ENCODE measurements at regions of chr1 and their contacts with region 1.

Region 1: DNA sequence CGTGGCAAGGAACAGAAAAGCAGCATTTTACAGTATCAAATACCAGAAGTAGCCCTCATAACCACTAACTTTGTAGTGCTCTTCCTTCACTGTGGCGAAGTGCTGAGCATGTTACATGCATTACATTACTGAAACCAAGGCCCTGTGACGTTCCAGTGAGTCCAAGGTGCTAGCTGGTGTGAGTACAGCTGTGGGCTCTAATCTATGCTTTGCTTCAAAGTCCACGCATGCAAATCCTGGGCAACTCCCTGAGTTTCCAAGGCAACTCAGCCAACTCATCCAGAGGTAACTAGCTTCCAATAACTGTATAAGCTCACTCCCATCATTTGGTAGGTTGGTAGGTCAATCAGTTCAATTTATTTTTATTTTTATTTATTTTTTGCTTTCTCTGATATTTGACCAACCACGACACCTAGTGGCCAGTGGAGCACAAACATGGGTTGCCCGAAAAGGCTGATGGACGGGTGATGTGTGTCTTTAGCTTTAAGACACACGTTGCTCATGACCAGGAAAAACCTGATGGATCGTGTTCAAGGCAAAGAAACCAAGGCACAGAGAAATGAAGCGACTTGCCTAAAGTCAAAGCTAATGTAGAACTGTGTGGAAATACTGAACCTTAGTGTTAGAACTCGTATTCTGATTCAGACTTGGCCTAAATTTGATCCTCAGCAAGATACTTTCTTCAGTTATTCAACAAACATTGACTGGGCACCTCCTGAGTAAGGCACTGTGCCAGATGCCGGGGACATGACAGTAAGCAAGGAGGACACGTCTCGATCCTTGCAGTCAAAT is 73.0 kb downstream of the GNG12 start:
- DNase-seq: peak; percentile 69
- H3K4me3 Mint-ChIP-seq: no peak overlapping the region
- H3K27ac Mint-ChIP-seq: no peak overlapping the region
- H3K4me1 Mint-ChIP-seq: no peaks in the 10 kb centered on the region
- H3K27me3 Mint-ChIP-seq: peaks cover 29% of the 10 kb centered on the region

Region 2: DNA sequence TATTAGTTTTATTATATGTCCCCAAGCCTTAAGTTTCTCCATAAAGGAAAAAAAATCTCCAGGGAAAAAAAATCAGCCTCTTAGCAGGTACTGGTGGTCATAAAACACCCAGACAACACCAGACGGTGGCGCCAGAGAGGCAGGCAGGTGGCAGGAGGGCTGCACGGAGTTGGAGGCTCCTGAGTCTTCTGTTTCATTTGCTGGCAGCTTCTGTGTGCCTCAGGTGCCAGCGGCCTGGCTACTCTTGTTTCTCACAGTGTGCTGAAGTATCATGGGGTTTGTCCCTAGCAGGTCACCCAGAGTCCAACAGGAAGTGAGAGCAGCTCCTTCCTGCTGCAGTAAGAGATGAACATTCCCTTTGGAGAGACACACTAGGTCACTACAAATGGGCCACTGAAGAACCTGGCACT is 198.5 kb before region 1 on chr1:
- CTCF ChIA-PET with region 1: interaction called, 26 read pairs
- POLR2A ChIA-PET with region 1: no interaction called
- DNase-seq: peak; percentile 88
- H3K4me3 Mint-ChIP-seq: no peak overlapping the region
- H3K27ac Mint-ChIP-seq: no peak overlapping the region
- H3K4me1 Mint-ChIP-seq: peaks cover 5% of the 10 kb centered on the region
- H3K27me3 Mint-ChIP-seq: peaks cover 2% of the 10 kb centered on the region

Region 3: DNA sequence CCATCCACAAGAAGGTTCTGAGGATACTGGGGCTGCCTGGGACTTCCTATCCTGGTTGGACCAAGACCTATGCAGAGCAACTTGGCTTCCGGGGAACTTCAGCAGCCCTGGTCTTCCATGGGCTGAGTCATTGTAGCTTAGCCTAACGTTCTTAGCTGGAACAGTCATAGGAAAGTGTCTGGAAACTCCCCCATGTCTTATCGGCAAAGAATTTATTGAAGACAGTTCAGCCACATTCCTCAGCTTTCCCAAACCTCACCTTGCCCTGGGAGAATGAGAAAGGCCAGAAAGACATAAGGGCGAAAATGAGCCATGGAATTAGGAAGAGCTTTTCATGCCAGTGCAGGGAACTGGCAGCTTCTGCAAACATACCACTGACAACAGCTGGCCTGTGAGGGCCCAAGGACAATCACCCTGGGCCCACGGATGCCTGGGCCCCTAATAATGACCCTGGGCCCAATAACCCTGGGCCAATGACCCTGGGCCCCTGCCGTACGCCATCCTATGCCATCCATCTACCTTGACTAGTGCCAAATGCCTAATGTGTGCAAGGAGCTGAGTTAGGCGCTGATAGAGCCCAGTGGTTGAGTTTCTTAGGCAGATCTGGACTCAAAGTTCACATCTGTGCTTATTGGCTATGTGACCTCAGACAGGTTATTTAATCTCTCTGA is 189.6 kb before region 1 on chr1:
- CTCF ChIA-PET with region 1: interaction called, 17 read pairs
- POLR2A ChIA-PET with region 1: no interaction called
- DNase-seq: no peak
- H3K4me3 Mint-ChIP-seq: no peak overlapping the region
- H3K27ac Mint-ChIP-seq: no peak overlapping the region
- H3K4me1 Mint-ChIP-seq: no peaks in the 10 kb centered on the region
- H3K27me3 Mint-ChIP-seq: no peaks in the 10 kb centered on the region

Region 4: DNA sequence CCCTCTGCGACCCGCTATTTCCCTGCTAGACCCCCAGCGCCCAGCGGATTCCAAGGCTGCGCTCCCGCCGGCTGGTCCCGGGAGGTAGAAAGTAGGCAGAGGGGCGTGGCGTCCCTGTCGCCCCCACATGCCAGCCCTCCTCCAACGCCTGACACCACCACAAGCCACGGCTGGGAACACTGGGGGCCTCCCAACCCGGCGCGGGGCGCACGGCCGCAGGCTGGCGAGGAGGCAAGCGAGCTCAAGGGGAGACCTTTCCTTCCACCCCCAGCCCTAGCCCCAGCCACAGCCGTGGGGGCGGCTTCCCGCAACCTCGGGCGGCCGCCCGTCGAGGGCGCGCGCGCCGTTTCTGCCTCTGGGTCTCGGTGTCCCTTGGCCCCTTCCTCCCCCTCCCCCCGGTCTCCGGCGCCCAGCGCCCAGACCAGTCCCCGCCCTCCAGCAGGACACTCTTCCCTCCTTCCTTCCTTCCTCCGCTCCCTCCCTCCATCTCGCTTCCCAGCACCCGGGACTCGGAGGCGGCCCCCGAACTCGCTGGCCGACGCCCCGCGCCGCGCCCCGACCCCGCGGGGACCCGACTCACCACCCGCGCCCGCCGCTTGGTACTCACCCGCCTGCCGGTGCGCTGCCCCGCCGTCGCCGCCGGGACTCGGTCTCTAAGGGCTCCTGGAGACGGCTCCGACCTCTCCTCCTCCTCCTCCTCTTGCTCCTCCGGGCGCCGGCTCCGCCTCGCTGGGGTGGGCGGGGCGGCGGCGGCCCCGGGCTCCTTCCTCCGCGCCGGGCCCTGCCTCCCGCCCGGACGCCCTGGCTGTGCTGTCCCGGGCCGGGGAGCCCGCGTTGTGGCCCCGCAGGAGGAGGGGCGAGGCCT is 72.7 kb after region 1 on chr1 and contains the start of gene GNG12:
- CTCF ChIA-PET with region 1: no interaction called
- POLR2A ChIA-PET with region 1: no interaction called
- DNase-seq: peak; percentile 28
- H3K4me3 Mint-ChIP-seq: peak within 1 kb of the TSS; percentile 59
- H3K27ac Mint-ChIP-seq: no peak within 1 kb of the TSS
- H3K4me1 Mint-ChIP-seq: peaks cover 16% of the 10 kb centered on the region
- H3K27me3 Mint-ChIP-seq: peaks cover 74% of the 10 kb centered on the region
- total RNA-seq, gene GNG12: 0.04 TPM in 1 of 2 experiments, not detected in the other